Psoas muscle (tissue), 8 donors: ENCODE measurements at regions of chr5 and their contacts with region 1.

Region 1: DNA sequence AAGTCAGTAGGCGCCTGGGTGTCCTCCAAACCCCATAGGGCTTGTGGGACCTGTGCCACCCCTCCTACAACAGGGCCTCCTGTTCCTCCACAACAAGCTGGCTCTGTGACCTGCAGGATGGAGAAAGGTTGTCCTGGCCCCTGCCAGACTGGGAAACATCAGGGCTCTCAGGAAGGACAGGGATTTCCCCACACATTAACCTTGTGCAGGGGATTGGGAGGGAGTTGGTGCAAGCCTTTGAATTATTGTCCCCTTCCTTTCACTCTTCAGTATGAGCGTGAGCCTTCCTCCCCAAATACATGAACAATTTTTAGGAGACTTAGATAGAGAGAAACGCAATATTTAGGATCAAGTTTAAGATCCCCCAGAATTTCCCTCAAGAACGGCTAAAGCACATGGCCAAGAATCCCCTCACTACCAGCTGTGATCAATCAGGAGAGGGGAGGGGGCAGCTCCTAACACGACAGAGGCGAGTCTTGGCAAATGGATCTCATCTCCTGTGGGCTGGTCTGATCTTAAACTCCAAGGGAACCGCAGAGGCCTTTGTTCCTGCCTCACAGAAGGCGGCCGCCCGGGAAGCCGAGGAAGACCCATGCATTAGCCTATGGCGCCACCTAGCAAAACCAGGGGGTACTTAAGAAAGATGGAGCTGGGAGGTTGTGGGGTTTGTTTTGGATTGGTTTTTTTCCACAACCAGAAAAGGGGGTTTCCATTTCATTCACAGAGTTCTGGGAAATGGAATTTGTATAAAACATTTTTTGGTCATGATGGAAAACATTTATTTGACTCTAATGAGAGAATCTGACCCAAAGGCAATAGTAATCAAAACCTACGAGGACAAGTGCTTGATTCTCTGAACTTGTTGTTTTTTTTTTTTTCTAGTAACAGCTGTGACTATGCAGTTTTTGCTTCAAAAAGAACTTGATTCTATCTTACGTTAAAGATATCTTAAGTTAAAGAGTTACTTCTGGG is 36.1 kb upstream of the OSMR start:
- DNase-seq: peak; percentile 76 to 84
- ATAC-seq: peak; percentile 88 to 97 (median 90)
- H3K4me3 ChIP-seq: no peak overlapping the region
- H3K27ac ChIP-seq: no peak overlapping the region
- H3K4me1 ChIP-seq: peaks cover 6% of the 10 kb centered on the region
- H3K27me3 ChIP-seq: no peaks in the 10 kb centered on the region
- CTCF ChIP-seq: peak; percentile 89

Region 2: GRCh38 chr5:38265546-38266179 is 544.0 kb before region 1 on chr5:
- intact Hi-C with region 1: loop called in 1 of 2 experiments (anchors 10 kb)
- DNase-seq: peak; percentile 34 to 54
- ATAC-seq: peak; percentile 66 to 84 (median 74)
- H3K4me3 ChIP-seq: peak overlapping the region; percentile 15
- H3K27ac ChIP-seq: no peak overlapping the region
- H3K4me1 ChIP-seq: no peaks in the 10 kb centered on the region
- H3K27me3 ChIP-seq: peaks cover 0 to 32% (median 0%) of the 10 kb centered on the region in 3 donors
- CTCF ChIP-seq: peak; percentile 78

Region 3: GRCh38 chr5:38420691-38421390 is 388.8 kb before region 1 on chr5:
- intact Hi-C with region 1: loop called (anchors 2 to 5 kb)
- DNase-seq: peak in 1 of 2 donors; percentile 35
- ATAC-seq: peak; percentile 83 to 92 (median 88)
- H3K4me3 ChIP-seq: no peak overlapping the region
- H3K27ac ChIP-seq: no peak overlapping the region
- H3K4me1 ChIP-seq: no peaks in the 10 kb centered on the region
- H3K27me3 ChIP-seq: no peaks in the 10 kb centered on the region
- CTCF ChIP-seq: peak; percentile 70

Region 4: GRCh38 chr5:38497946-38498345 is 311.7 kb before region 1 on chr5:
- intact Hi-C with region 1: loop called in 1 of 2 experiments (anchors 5 kb)
- DNase-seq: no peak
- ATAC-seq: peak in 3 of 4 donors; percentile 48 to 72 (median 70)
- H3K4me3 ChIP-seq: no peak overlapping the region
- H3K27ac ChIP-seq: no peak overlapping the region
- H3K4me1 ChIP-seq: no peaks in the 10 kb centered on the region
- H3K27me3 ChIP-seq: no peaks in the 10 kb centered on the region
- CTCF ChIP-seq: peak; percentile 26

Region 5: GRCh38 chr5:38666668-38667498 is 142.8 kb before region 1 on chr5:
- intact Hi-C with region 1: loop called in 1 of 2 experiments (anchors 5 kb)
- DNase-seq: peak; percentile 39 to 74
- ATAC-seq: peak; percentile 85 to 96 (median 94)
- H3K4me3 ChIP-seq: no peak overlapping the region
- H3K27ac ChIP-seq: no peak overlapping the region
- H3K4me1 ChIP-seq: peaks cover 22% of the 10 kb centered on the region
- H3K27me3 ChIP-seq: no peaks in the 10 kb centered on the region
- CTCF ChIP-seq: peak; percentile 72